ENCODE measurements at regions of chr22 and their contacts with region 1.

Region 1: DNA sequence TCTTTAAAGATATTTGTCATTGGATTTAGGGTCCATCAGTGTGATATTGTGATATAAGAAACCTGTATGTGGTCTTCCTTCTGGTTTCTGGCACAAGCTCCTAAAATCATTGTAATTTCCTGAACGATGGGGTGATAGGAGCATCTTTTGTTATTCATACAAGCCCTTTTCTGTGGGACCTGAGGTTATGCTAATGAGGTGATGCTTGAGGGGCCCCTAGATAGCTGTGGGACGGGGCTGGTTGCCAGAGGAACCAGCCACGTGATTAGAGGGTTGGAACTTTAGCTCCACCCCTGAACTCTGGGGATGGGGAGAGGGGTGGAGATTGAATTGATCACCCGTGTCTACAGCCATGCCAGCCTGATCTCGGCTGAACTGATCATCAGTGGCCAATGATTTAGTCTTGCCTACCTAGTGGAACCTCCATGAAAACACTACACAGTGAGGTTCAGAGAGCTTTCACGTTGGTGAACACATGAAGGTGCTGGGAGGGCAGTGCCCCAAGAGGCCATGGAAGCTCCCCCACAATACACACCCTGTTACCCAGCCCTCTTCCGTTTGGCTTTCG is 62.8 kb downstream of the BCR start:
- DNase-seq: peak; percentile 50 to 91 (median 70)
- ATAC-seq: peak; percentile 94
- H3K4me3 ChIP-seq: peak overlapping the region; percentile 26 to 41
- H3K4me3 Mint-ChIP-seq: peak overlapping the region; percentile 69
- H3K27ac ChIP-seq: peak overlapping the region; percentile 59 to 82
- H3K27ac Mint-ChIP-seq: peak overlapping the region; percentile 90
- H3K4me1 ChIP-seq: peaks cover 81% of the 10 kb centered on the region
- H3K4me1 Mint-ChIP-seq: peaks cover 69% of the 10 kb centered on the region
- H3K27me3 ChIP-seq: no peaks in the 10 kb centered on the region
- H3K27me3 Mint-ChIP-seq: no peaks in the 10 kb centered on the region
- CTCF ChIP-seq: no peak

Region 2: DNA sequence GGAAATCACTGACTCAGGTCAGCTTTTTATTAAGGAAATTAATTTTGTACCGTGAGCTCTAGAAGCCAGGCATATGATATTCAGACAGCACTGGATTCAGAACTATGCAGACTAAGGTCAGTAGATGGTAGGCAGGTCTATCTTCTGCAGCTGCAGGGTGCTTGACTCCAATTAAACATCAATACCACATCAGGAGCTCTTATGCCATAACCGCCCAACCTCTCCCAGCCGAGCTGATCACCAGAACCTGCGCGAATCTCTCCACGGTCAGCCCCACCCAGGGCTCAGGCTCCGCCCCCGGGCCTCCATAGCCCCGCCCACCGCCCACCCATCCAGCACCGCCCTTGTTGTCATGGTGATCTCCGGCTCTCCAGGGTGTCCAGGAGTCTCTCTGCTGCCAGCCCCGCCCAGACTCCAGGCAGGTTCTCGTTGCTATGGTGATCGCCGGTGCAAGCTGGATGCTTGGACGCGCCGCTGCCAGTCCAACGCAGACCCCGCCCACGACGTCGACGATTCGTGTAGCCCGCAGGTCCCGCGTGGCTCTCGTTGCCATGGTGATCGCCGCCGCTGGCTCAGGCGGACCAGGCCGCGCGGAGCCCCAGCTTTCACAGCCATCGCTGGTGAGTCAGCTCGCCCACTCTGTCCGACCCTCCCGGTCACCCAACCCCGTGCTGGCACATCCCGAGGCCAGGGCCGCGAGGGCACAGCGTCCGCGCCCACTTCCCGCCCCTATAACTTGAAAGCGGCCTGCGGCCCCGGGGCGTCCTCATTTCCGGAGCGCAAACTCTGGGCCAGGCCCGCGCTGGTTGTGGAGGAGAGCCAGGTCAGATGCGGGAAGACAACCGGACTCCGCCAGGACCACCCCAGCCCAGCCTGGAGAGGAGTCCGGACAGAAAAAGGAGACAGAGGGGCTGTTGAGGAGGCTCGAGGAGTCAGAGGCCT is 97.9 kb before region 1 on chr22 and contains the start of gene RAB36:
- CTCF ChIA-PET with region 1: no interaction called
- POLR2A ChIA-PET with region 1: no interaction called
- intact Hi-C with region 1: loop called (anchors 1 kb)
- DNase-seq: peak; percentile 73 to 97 (median 89)
- ATAC-seq: peak; percentile 50
- H3K4me3 ChIP-seq: peak within 1 kb of the TSS; percentile 35 to 40
- H3K4me3 Mint-ChIP-seq: peak within 1 kb of the TSS; percentile 78
- H3K27ac ChIP-seq: peak within 1 kb of the TSS; percentile 71 to 87
- H3K27ac Mint-ChIP-seq: peak within 1 kb of the TSS; percentile 86
- H3K4me1 ChIP-seq: peaks cover 55% of the 10 kb centered on the region
- H3K4me1 Mint-ChIP-seq: peaks cover 46% of the 10 kb centered on the region
- H3K27me3 ChIP-seq: no peaks in the 10 kb centered on the region
- H3K27me3 Mint-ChIP-seq: no peaks in the 10 kb centered on the region
- CTCF ChIP-seq: no peak
- total RNA-seq, gene RAB36: 0.52 to 0.64 TPM

Region 3: DNA sequence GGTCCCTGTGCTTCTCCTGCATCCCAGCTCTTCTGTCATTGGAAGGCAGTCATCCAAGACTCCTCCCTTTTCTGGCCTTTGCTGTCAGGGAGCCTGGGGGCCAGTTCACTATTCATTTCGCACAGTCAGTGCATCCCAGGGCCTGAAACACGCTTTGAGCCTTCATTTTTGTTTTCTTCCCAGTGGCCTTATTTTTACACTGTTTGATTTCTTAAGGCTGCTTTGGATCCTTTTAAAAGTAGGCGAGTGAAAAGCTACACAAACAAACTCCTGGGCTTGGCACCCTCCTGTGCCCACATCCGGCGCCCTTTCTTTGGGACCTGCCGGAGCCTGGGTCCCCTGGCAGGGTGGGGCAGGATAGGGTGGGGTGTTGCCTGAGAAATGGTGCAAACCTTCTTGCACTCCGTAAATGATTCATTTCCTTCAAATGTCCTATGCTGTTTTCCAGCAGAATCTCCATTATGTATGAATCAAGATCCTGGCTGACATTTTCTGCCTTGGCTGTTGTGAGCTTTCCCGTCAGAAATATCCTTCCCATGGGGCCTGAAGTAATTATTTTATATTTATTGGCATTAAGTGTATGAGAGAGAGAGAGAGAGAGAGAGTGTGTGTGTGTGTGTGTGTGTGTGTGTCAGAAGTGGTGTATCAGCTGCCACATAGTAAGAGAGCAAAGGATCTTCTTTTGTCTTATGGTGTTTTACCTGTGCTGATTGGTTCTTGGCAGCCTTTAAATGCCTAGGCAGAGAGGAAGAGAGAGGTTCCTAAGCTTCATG is 17.2 kb before region 1 on chr22:
- CTCF ChIA-PET with region 1: no interaction called
- POLR2A ChIA-PET with region 1: interaction called, 9 read pairs
- intact Hi-C with region 1: loop called in 1 of 2 experiments (anchors 2 kb)
- DNase-seq: peak in 7 of 9 experiments; percentile 32 to 73 (median 53)
- ATAC-seq: peak; percentile 80
- H3K4me3 ChIP-seq: no peak overlapping the region
- H3K4me3 Mint-ChIP-seq: peak overlapping the region; percentile 38
- H3K27ac ChIP-seq: peak overlapping the region; percentile 26 to 55
- H3K27ac Mint-ChIP-seq: peak overlapping the region; percentile 70
- H3K4me1 ChIP-seq: peaks cover 77% of the 10 kb centered on the region
- H3K4me1 Mint-ChIP-seq: peaks cover 76% of the 10 kb centered on the region
- H3K27me3 ChIP-seq: no peaks in the 10 kb centered on the region
- H3K27me3 Mint-ChIP-seq: no peaks in the 10 kb centered on the region
- CTCF ChIP-seq: no peak

Region 4: GRCh38 chr22:23281406-23282088 is 38.5 kb after region 1 on chr22:
- CTCF ChIA-PET with region 1: interaction called, 10 read pairs
- POLR2A ChIA-PET with region 1: interaction called, 4 read pairs
- intact Hi-C with region 1: loop called in 1 of 2 experiments (anchors 2 kb)
- DNase-seq: peak; percentile 60 to 88 (median 85)
- ATAC-seq: peak; percentile 67
- H3K4me3 ChIP-seq: no peak overlapping the region
- H3K4me3 Mint-ChIP-seq: no peak overlapping the region
- H3K27ac ChIP-seq: peak overlapping the region in 1 of 2 experiments; percentile 23
- H3K27ac Mint-ChIP-seq: no peak overlapping the region
- H3K4me1 ChIP-seq: peaks cover 24% of the 10 kb centered on the region
- H3K4me1 Mint-ChIP-seq: peaks cover 20% of the 10 kb centered on the region
- H3K27me3 ChIP-seq: no peaks in the 10 kb centered on the region
- H3K27me3 Mint-ChIP-seq: no peaks in the 10 kb centered on the region
- CTCF ChIP-seq: peak; percentile 94

Measured in CD8-positive, alpha-beta T cell (primary cell).